ENCODE measurements at regions of chr15 and their contacts with region 1.

Region 1: GRCh38 chr15:26095710-26096330 is 232.7 kb upstream of the ATP10A start:
- DNase-seq: no peak
- H3K4me3 ChIP-seq: no peak overlapping the region
- H3K27ac ChIP-seq: no peak overlapping the region
- H3K27me3 ChIP-seq: no peaks in the 10 kb centered on the region
- CTCF ChIP-seq: peak; percentile 52

Region 2: GRCh38 chr15:25905140-25905539 is 190.7 kb before region 1 on chr15:
- CTCF ChIA-PET with region 1: no interaction called
- POLR2A ChIA-PET with region 1: no interaction called
- DNase-seq: peak; percentile 21
- H3K4me3 ChIP-seq: no peak overlapping the region
- H3K27ac ChIP-seq: peak overlapping the region; percentile 31
- H3K27me3 ChIP-seq: no peaks in the 10 kb centered on the region
- CTCF ChIP-seq: no peak

Region 3: DNA sequence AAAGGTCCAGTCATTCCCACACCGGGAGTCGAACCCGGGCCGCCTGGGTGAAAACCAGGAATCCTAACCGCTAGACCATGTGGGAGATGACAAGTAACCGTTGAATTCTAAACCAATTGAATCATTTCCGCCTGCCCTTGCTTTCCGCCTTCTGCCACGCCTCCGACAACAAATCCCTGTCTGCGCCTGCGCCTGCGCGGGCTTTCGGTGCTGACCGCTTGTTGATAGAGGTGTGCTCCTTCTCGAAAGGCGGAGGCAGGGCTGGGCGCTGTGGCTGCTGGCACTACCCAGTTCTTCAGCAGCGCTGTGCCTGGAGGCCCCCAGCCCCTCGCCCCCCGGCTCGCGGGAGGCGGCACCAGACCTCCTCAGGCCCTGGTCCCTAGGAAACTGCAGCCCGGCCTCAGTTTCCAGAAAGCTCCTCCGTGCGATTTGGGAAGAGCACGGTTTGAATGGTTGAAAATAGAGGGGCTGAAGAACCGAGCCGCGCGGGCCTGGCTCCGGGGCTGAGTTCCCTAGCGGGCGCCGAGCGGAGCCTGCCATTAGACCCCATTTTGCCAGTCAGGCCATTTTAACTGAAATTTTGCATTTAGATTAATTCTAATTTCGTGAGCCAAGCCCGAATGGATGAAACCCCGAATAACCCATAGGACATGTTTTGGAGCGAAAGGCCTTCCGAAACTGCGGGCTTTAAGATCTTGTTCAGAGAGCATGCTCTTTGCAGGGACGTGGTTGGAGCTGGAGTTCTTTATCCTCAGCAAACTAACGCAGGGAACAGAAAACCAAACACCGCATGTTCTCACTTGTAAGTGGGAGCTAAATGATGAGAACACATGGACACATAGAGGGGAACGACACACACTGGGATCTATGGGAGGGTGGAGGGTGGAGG is 13.4 kb before region 1 on chr15:
- CTCF ChIA-PET with region 1: interaction called, 10 read pairs
- POLR2A ChIA-PET with region 1: no interaction called
- DNase-seq: peak; percentile 91
- H3K4me3 ChIP-seq: peak overlapping the region; percentile 77
- H3K27ac ChIP-seq: peak overlapping the region; percentile 87
- H3K27me3 ChIP-seq: peaks cover 4% of the 10 kb centered on the region
- CTCF ChIP-seq: 0 out of 2 replicates have a peak, but pooled peaks have one; percentile 1

Region 4: GRCh38 chr15:26115229-26115943 is 19.6 kb after region 1 on chr15:
- CTCF ChIA-PET with region 1: no interaction called
- POLR2A ChIA-PET with region 1: no interaction called
- DNase-seq: no peak
- H3K4me3 ChIP-seq: no peak overlapping the region
- H3K27ac ChIP-seq: no peak overlapping the region
- H3K27me3 ChIP-seq: no peaks in the 10 kb centered on the region
- CTCF ChIP-seq: no peak